Head of caudate nucleus (tissue), 42 donors: ENCODE measurements at regions of chr19 and their contacts with region 1.

Region 1: DNA sequence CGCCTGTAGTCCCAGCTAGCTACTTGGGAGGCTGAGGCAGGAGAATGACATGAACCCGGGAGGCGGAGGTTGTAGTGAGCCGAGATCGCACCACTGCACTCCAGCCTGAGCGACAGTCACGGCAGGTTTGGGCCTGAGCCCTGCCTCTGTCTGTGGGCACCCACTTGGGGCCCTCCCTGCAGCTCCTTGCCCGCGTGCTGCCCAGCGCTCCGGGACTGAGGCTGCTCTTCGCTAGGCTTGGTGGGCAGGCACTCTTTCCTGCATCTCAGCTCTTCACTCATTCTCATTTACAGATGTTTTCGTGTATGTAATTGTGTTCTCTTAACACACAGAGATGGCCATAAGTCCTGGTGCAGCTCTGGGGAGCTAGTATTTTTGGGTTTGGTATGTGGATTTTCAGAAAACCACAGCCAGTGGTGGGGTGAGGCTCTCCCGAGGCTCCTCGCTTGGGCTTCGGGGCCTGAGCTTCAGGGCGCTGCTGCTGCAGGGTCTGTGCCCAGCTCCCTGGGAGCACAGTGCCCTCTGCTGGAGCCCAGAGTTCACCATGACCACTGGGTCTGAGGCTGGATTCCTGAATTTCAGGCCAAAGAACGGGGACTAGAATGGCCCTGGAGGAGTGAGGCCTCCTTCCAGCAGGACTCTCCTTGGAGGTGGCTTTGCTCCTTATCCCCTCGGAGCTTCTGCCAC is 15.2 kb downstream of the UPF1 start:
- DNase-seq: peak; percentile 69 to 92 (median 84)

Region 2: GRCh38 chr19:18469069-18469846 is 377.7 kb before region 1 on chr19:
- intact Hi-C with region 1: loop called (anchors 10 kb)
- DNase-seq: peak in 39 of 42 donors; percentile 30 to 83 (median 63)

Region 3: GRCh38 chr19:18588611-18589379 is 258.2 kb before region 1 on chr19 and contains the start of gene REX1BD:
- intact Hi-C with region 1: loop called (anchors 2 kb)
- DNase-seq: peak; percentile 46 to 92 (median 85)